IMR-90 (cell line): ENCODE measurements at regions of chr5 and their contacts with region 1.

Region 1: GRCh38 chr5:61055434-61056006 is 106.7 kb downstream of the SMIM15 start:
- DNase-seq: peak; percentile 72
- ATAC-seq: no peak
- H3K4me3 ChIP-seq: no peak overlapping the region
- H3K27ac ChIP-seq: no peak overlapping the region
- H3K4me1 ChIP-seq: peaks cover 4% of the 10 kb centered on the region; the same call in 1 of the 2 replicates
- H3K27me3 ChIP-seq: no peaks in the 10 kb centered on the region
- CTCF ChIP-seq: peak; percentile 76
- POLR2A ChIP-seq: no peak
- RAD21 ChIP-seq: peak; percentile 83

Region 2: GRCh38 chr5:60710373-60710772 is 345.1 kb before region 1 on chr5:
- CTCF ChIA-PET with region 1: no interaction called
- POLR2A ChIA-PET with region 1: no interaction called
- dilution Hi-C with region 1: no loop called
- in situ Hi-C with region 1: no loop called
- intact Hi-C with region 1: no loop called
- DNase-seq: no peak
- ATAC-seq: no peak
- H3K4me3 ChIP-seq: no peak overlapping the region
- H3K27ac ChIP-seq: no peak overlapping the region
- H3K4me1 ChIP-seq: no peaks in the 10 kb centered on the region
- H3K27me3 ChIP-seq: peaks cover 4% of the 10 kb centered on the region
- CTCF ChIP-seq: no peak
- POLR2A ChIP-seq: no peak
- RAD21 ChIP-seq: no peak

Region 3: GRCh38 chr5:60960591-60960990 is 94.9 kb before region 1 on chr5:
- CTCF ChIA-PET with region 1: no interaction called
- POLR2A ChIA-PET with region 1: no interaction called
- dilution Hi-C with region 1: no loop called
- in situ Hi-C with region 1: no loop called
- intact Hi-C with region 1: loop called (anchors 5 kb)
- DNase-seq: peak; percentile 46
- ATAC-seq: 0 out of 2 replicates have a peak, but pooled peaks have one; percentile 59
- H3K4me3 ChIP-seq: no peak overlapping the region
- H3K27ac ChIP-seq: no peak overlapping the region
- H3K4me1 ChIP-seq: no peaks in the 10 kb centered on the region
- H3K27me3 ChIP-seq: no peaks in the 10 kb centered on the region
- CTCF ChIP-seq: peak; percentile 62
- POLR2A ChIP-seq: no peak
- RAD21 ChIP-seq: peak; percentile 38

Region 4: GRCh38 chr5:61010467-61011454 is 44.8 kb before region 1 on chr5:
- CTCF ChIA-PET with region 1: no interaction called
- POLR2A ChIA-PET with region 1: no interaction called
- dilution Hi-C with region 1: no loop called
- in situ Hi-C with region 1: no loop called
- intact Hi-C with region 1: no loop called
- DNase-seq: peak; percentile 13
- ATAC-seq: no peak
- H3K4me3 ChIP-seq: no peak overlapping the region
- H3K27ac ChIP-seq: no peak overlapping the region
- H3K4me1 ChIP-seq: no peaks in the 10 kb centered on the region
- H3K27me3 ChIP-seq: no peaks in the 10 kb centered on the region
- CTCF ChIP-seq: peak; percentile 46
- POLR2A ChIP-seq: no peak
- RAD21 ChIP-seq: peak; percentile 44

Region 5: GRCh38 chr5:61319388-61320146 is 264.0 kb after region 1 on chr5:
- CTCF ChIA-PET with region 1: no interaction called
- POLR2A ChIA-PET with region 1: no interaction called
- dilution Hi-C with region 1: no loop called
- in situ Hi-C with region 1: loop called (anchors 10 kb)
- intact Hi-C with region 1: no loop called
- DNase-seq: no peak
- ATAC-seq: no peak
- H3K4me3 ChIP-seq: no peak overlapping the region
- H3K27ac ChIP-seq: no peak overlapping the region
- H3K4me1 ChIP-seq: peaks cover 9% of the 10 kb centered on the region
- H3K27me3 ChIP-seq: no peaks in the 10 kb centered on the region
- CTCF ChIP-seq: no peak
- POLR2A ChIP-seq: no peak
- RAD21 ChIP-seq: no peak

Region 6: DNA sequence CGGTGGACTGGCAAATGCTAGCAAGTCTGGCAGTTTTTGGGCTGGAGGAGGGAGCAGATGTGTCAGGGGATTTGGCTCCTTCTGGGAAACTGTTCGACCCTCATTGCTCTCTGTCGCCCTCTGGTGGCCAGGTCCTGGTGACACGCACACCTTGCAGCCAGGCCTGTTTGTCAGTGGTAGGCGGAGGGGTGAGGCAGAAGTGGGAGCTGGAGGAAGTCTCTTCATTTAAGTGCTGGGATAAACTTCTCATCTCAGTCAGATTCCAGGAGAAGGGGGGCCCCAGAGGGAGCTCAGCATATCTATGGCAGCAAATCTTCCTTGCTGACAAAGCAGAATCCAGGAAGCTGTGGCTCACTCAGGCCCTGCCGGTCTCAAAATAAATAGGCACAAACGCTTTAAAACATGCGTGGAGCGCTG is 603.1 kb after region 1 on chr5:
- CTCF ChIA-PET with region 1: interaction called, 5 read pairs
- POLR2A ChIA-PET with region 1: no interaction called
- dilution Hi-C with region 1: no loop called
- in situ Hi-C with region 1: loop called (anchors 10 kb)
- intact Hi-C with region 1: loop called (anchors 1 kb)
- DNase-seq: peak; percentile 65
- ATAC-seq: peak; percentile 75
- H3K4me3 ChIP-seq: no peak overlapping the region
- H3K27ac ChIP-seq: no peak overlapping the region
- H3K4me1 ChIP-seq: no peaks in the 10 kb centered on the region
- H3K27me3 ChIP-seq: peaks cover 31% of the 10 kb centered on the region
- CTCF ChIP-seq: peak; percentile 85
- POLR2A ChIP-seq: no peak
- RAD21 ChIP-seq: peak; percentile 84

Region 7: DNA sequence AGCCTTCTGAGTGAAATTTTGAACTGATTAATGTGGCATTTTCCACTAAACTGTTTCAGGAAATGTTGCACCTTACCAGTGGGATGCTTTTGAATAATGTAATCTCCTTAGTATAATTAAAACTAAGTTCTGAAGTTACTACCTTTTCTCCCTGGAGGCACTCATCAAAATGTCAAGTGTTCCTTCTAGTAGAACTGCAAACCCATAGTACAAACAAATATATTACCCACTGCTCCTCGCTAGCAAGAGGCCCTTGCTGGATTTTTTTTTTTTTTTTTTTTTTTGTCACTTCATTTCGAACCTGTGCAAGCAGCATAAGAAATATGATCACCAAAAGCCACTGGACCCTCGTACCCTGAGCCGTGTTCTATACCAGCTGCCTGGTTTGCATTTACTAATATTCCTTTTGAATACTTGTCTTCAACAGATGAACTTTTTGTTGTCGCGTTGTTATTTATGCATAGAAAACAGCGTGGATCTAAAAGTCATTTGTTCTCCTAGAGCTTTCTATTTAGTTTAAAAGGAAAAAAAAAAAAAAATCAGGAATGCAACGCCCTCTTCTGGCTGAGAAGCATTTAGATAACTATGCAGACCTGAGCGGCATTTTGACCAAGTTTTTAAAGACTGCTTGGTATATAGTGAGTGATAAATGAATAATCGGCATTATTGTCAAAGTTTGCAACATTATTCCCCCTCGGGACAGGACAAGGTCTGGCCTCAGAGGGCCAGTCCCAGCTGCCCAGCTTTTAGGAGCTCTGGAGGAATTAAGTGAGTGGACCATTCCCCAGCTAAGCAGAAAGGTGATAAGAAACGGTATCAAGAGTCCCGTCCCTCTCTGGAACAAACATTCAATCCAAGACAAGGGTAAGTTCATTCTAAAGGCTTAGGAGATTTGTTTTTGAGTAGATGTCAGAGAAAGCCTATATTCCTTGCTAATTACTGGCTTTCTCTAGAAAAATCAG is 1088.0 kb after region 1 on chr5:
- CTCF ChIA-PET with region 1: no interaction called
- POLR2A ChIA-PET with region 1: no interaction called
- dilution Hi-C with region 1: no loop called
- in situ Hi-C with region 1: loop called (anchors 25 kb)
- intact Hi-C with region 1: loop called (anchors 10 kb)
- DNase-seq: peak; percentile 40
- ATAC-seq: peak; percentile 72
- H3K4me3 ChIP-seq: no peak overlapping the region
- H3K27ac ChIP-seq: no peak overlapping the region
- H3K4me1 ChIP-seq: no peaks in the 10 kb centered on the region
- H3K27me3 ChIP-seq: no peaks in the 10 kb centered on the region; the same call in none of the 2 replicates
- CTCF ChIP-seq: peak; percentile 55
- POLR2A ChIP-seq: no peak
- RAD21 ChIP-seq: peak; percentile 27; the same call in 1 of the 2 replicates